CD4-positive, alpha-beta memory T cell (primary cell): ENCODE measurements at regions of chr12 and their contacts with region 1.

Region 1: GRCh38 chr12:54560374-54560858 is 11.0 kb downstream of the PDE1B start:
- DNase-seq: peak; percentile 82 to 93 (median 86)
- H3K4me3 ChIP-seq: peak overlapping the region; percentile 52 to 76
- H3K4me3 Mint-ChIP-seq: peak overlapping the region; percentile 81 to 99 (median 94)
- H3K27ac ChIP-seq: peak overlapping the region; percentile 53
- H3K27ac Mint-ChIP-seq: peak overlapping the region; percentile 27 to 99 (median 96)
- H3K4me1 ChIP-seq: peaks cover 18% of the 10 kb centered on the region
- H3K4me1 Mint-ChIP-seq: peaks cover 10 to 24% (median 16%) of the 10 kb centered on the region in 4 donors
- H3K27me3 ChIP-seq: no peaks in the 10 kb centered on the region
- H3K27me3 Mint-ChIP-seq: no peaks in the 10 kb centered on the region

Region 2: DNA sequence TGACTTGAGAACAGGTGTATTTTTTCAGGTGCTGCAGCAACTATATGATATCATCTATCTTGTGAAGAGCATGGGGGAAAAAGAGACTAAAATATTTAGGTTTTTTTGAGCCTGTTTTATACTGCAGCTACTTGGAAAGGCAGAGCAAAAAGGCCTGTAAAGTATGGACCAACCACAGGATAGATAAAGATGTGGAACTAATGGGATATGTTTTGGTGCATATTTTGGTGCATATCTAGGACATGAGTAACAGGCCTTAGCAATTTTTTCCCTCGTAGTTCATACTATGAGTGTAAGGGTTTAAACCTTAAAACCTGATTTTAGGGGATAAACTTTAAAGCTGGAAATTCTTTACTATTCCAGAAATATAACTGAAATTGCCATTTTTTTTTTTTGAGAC is 81.0 kb before region 1 on chr12:
- CTCF ChIA-PET with region 1: no interaction called
- POLR2A ChIA-PET with region 1: no interaction called
- intact Hi-C with region 1: no loop called
- DNase-seq: no peak
- H3K4me3 ChIP-seq: no peak overlapping the region
- H3K4me3 Mint-ChIP-seq: no peak overlapping the region
- H3K27ac ChIP-seq: no peak overlapping the region
- H3K27ac Mint-ChIP-seq: no peak overlapping the region
- H3K4me1 ChIP-seq: no peaks in the 10 kb centered on the region
- H3K4me1 Mint-ChIP-seq: no peaks in the 10 kb centered on the region
- H3K27me3 ChIP-seq: no peaks in the 10 kb centered on the region
- H3K27me3 Mint-ChIP-seq: peaks cover 8 to 9% of the 10 kb centered on the region in 2 donors

Region 3: DNA sequence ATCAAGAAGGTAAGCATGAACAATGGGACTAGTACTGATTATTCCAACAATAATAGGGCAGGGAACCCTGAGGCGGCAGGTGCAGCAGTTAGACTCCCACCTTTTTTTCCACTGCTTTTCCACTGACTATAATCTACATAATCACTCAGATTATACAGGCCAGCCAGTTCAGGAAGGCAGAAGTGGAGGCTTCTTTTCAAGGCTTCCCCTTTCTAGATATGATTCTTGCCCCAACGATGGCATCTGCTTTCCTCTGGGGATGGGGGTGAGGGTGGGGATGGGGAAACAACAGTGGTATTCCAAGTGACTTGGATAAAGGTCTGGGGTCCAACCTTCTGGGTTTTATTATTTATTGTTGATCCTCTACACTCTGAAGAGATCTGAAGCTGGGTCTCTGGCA is 62.5 kb before region 1 on chr12:
- CTCF ChIA-PET with region 1: no interaction called
- POLR2A ChIA-PET with region 1: interaction called, 9 read pairs
- intact Hi-C with region 1: loop called (anchors 1 kb)
- DNase-seq: no peak
- H3K4me3 ChIP-seq: peak overlapping the region; percentile 74 to 78
- H3K4me3 Mint-ChIP-seq: peak overlapping the region; percentile 94 to 100 (median 99)
- H3K27ac ChIP-seq: peak overlapping the region; percentile 78
- H3K27ac Mint-ChIP-seq: peak overlapping the region; percentile 88 to 99 (median 98)
- H3K4me1 ChIP-seq: peaks cover 40% of the 10 kb centered on the region
- H3K4me1 Mint-ChIP-seq: peaks cover 33 to 56% (median 37%) of the 10 kb centered on the region in 4 donors
- H3K27me3 ChIP-seq: no peaks in the 10 kb centered on the region
- H3K27me3 Mint-ChIP-seq: no peaks in the 10 kb centered on the region

Region 4: GRCh38 chr12:54549774-54550451 is 10.5 kb before region 1 on chr12:
- CTCF ChIA-PET with region 1: interaction called, 4 read pairs
- POLR2A ChIA-PET with region 1: interaction called, 40 read pairs
- intact Hi-C with region 1: no loop called
- DNase-seq: no peak
- H3K4me3 ChIP-seq: peak overlapping the region in 1 of 2 donors; percentile 30
- H3K4me3 Mint-ChIP-seq: peak overlapping the region; percentile 80 to 95 (median 86)
- H3K27ac ChIP-seq: no peak overlapping the region
- H3K27ac Mint-ChIP-seq: peak overlapping the region in 5 of 7 donors; percentile 40 to 77 (median 49)
- H3K4me1 ChIP-seq: peaks cover 15% of the 10 kb centered on the region
- H3K4me1 Mint-ChIP-seq: peaks cover 7 to 35% (median 17%) of the 10 kb centered on the region in 4 donors
- H3K27me3 ChIP-seq: no peaks in the 10 kb centered on the region
- H3K27me3 Mint-ChIP-seq: peaks cover 0 to 2% of the 10 kb centered on the region in 2 donors

Region 5: DNA sequence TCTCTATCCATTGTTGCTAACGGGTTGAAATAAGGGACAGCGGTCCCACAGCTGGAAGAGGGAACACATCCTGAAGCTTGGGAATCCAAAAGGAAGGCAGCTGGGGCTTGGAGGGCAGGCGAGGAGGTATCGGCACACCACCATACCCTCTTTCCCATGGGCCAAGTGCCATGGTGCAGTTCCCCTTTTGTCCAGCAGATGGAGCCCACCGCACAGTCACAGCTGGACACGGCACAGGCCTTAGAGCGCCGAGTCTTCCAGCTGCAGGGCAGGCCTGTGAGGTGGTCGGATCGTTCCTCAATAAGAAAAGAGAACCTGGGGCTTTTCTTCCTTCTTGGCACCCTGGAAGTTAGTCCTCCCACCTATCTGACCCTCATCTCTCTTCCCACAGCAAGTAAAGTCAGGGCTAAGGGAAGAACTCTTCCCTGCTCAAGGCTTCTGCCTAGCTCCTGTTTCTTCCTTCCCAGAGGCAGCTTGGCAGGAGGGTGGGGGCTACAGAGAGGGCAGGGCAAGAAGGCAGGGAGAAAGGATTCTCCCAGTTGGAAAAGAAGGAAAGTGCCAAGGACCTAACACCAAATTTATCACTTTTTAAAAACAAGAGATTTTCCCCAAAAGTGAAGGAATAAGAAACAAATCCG is 19.4 kb after region 1 on chr12:
- CTCF ChIA-PET with region 1: interaction called, 56 read pairs
- POLR2A ChIA-PET with region 1: interaction called, 7 read pairs
- intact Hi-C with region 1: no loop called
- DNase-seq: peak; percentile 63 to 74 (median 68)
- H3K4me3 ChIP-seq: no peak overlapping the region
- H3K4me3 Mint-ChIP-seq: peak overlapping the region in 1 of 8 donors; percentile 44
- H3K27ac ChIP-seq: no peak overlapping the region
- H3K27ac Mint-ChIP-seq: no peak overlapping the region
- H3K4me1 ChIP-seq: peaks cover 7% of the 10 kb centered on the region
- H3K4me1 Mint-ChIP-seq: peaks cover 4 to 7% (median 5%) of the 10 kb centered on the region in 4 donors
- H3K27me3 ChIP-seq: no peaks in the 10 kb centered on the region
- H3K27me3 Mint-ChIP-seq: peaks cover 3 to 12% of the 10 kb centered on the region in 2 donors